Head of caudate nucleus (tissue), 42 donors: ENCODE measurements at regions of chr12 and their contacts with region 1.

Region 1: DNA sequence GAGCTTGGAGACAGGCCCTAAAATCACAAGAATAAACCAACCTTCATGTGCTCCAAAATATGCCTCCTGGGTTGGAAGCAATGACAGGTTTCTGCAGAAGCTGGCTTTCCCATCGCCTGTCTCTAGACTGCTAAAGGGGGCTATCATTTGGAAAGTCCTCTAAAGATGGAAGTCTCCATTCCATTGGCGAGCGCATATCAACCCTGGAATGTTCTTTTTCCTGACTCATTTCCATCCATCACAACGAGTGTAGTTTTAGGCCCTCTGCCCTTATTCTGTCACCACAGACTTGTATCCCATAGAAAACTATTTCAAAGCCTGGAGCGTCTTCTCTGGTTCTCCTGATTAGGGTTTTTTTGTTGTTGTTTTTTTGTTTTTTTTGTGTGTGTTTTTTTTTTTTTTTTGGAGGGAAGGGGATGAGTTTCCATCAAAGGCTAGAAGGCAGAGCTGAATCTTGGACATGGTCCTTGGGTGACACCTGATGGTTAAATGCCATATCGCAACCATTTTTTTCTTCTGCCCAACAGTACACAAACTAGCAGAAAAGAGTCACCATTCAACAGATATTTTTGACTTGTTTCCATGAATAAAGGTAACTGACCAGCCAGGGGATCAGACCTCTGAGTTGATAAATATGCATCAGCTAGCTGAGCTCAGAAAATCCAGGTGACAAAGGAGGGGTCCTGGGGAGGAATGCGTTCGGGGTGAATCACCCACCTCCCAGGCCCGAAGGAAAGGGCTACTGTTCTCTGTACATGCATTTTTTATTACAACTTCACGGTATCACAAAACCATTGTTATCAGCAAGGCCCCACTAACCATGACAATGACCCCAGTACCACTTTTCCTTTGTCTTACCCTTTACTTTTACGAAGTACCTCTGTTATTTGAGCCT is 40.5 kb downstream of the KCNA5 start:
- DNase-seq: peak in 31 of 42 donors; percentile 20 to 86 (median 59)

Region 2: DNA sequence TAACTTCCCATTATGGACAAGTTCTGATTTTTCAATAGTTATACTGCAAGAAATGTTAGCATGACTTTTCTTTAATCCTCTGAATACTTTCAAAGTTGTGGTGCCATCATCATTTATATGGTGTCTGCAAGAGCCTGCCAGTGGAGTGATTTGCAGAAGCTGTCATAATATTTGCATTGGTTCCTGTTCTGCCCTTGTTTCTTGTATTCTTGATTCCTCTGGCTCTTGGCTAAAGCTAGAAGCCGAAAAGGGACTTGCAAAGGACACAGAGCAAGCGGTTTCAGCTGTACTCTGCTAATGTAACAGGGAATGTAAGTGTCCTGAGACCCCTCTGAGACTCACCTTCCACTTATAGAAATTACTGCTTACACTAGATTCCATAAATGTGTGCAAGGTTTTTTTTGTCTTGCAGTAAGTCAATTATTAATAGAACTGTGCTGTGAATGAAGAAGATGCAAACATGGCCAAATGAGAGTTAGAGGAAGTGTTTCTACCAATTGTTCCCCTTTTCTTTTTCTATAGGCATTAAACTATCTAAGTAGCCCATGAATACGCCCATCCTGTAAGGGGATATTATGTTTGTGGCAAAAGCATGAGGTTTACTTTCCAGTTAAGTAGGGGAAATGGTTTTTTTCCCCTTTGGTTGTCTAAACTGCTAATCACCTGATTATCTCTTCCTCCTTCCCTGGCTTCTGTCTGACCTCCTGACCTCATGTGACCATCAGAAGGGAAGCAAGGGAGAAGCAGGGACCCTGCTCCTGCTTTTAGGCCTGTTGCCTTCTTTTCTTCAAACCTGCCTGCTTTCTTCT is 516.9 kb before region 1 on chr12:
- intact Hi-C with region 1: no loop called
- DNase-seq: peak in 1 of 42 donors; percentile 51

Region 3: DNA sequence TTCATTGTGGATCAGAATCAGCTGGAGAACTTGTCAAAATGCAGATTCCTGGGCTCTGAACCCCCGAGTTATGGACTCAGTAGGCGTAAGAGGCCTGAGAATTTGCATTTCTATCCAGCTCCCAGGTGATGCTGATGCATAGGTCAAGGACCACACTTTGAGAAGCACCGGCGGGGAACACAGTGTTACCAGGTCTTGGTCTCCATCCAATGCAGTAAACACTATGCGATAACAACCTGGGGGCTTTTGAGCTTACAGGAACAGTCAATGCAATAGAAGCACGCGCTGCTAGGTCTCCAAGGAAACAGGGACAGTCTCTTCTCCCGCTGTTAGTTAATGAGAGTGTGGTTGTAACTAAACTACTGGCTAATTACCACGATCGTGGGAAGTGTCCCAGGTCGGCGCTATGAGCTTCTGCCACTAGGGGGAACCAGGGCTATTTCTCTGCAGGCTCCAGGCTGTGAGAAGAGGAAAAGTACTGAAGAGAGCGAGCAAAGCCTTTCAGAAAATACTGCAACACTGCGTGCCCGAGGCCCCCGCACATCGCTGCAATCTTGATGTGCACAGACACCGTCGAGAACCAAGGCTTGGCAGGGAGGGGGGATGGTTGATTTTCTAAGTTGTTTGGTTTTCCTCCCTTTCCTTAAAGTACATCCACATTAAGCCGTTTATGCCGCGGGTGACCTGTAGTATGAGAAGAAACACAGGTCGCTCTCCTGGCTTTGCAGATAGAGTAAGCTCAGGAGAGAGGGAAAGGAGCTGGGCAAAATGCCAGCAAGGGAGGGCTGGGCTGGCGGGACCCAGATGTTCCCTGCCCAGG is 226.5 kb before region 1 on chr12:
- intact Hi-C with region 1: loop called (anchors 5 kb)
- DNase-seq: peak; percentile 78 to 95 (median 88)

Region 4: GRCh38 chr12:4918950-4919660 is 165.1 kb before region 1 on chr12:
- intact Hi-C with region 1: no loop called
- DNase-seq: no peak

Region 5: DNA sequence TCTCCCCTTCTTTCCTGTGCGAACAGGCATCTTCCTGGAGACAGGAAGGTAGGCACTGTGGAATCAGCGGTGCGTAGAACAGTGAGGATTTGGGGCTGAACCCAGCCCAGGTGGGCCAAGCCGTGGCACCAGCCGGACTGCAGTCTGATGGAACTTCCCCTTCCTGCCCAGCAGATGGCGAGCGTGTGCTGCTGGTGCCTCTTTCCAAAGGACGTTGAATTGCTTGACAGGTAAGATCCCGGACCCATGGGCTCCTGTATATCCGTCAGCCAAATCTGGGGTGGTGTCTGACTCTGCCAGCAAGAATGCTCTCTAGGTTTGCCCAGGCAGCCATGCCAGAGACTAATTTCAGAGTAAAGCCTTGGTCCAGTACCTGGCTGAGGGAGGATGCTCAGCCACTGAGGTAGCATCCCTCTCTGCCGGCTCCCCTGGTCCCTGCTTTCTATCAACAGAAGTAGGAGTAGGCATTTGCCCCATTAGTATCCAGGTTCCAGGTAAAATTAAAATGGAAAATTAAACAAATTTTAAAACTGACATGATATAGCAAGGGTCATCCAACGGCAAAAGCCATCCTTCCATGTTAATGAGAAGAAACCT is 61.6 kb before region 1 on chr12:
- intact Hi-C with region 1: loop called (anchors 5 kb)
- DNase-seq: peak in 29 of 42 donors; percentile 20 to 75 (median 51)

Region 6: GRCh38 chr12:5428332-5429221 is 344.4 kb after region 1 on chr12:
- intact Hi-C with region 1: no loop called
- DNase-seq: peak in 4 of 42 donors; percentile 6 to 43 (median 20)